ENCODE measurements at regions of chr13 and their contacts with region 1.

Region 1: DNA sequence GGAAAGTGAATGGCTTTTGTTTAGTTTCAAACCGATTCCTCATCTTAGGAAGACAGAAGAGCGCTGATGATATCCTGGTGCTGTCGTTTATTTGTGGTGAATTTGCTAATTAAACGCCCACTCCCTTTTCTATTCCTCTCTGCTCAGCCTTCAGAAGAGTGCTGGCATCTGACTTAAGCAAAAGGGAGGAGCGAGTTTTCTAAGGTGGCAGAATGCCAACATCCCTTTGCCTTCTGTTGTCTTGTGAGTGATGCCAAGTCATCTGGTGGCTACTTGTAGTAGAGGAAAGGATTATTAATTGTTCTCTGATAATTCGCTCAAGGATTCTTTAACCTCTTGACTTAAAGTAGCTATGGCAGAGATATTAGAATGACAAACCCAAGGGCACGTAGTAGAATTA is 68.1 kb downstream of the ERCC5 start:
- DNase-seq: no peak
- ATAC-seq: no peak
- H3K4me3 ChIP-seq: no peak overlapping the region
- H3K27ac ChIP-seq: no peak overlapping the region
- H3K4me1 ChIP-seq: peaks cover 0 to 11% (median 0%) of the 10 kb centered on the region in 12 donors
- H3K27me3 ChIP-seq: no peaks in the 10 kb centered on the region
- CTCF ChIP-seq: no peak
- POLR2A ChIP-seq: no peak

Region 2: DNA sequence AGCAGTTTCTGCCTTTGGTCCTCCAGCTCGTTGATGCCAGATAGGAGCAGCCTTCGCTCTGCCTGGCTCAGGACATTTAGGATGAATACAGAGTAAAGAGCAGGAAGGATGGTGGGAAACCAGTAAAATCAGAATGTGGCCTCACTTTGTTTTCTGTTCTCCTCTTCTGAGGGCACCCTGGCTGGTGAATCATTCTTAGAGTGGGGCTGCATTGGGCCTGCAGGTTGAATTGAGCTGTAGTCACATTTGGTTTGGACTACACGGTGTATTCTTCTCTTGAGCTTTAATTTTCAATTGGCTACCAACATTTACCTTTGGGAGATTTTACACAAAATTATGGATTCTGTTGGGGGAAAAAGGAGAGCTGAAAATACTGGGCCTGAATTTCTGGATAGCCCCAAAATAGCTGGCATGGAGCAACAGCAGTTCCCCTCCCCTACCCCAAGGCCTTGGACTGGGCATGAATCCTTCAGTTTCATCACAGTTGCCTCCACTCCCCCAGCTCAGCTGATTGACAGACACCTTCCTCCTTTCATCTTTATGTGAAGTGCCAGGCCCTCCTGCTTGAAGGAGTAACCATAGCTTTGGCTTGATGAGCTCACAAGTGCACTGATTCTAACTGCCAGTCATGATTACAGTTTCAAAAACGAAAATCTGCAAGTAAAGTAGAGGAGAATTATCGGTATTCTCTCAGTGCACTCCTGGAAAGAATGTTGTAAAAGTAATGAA is 43.8 kb before region 1 on chr13:
- intact Hi-C with region 1: loop called in 1 of 10 experiments (anchors 5 kb)
- DNase-seq: no peak
- ATAC-seq: peak in 3 of 4 donors; percentile 11 to 19 (median 15)
- H3K4me3 ChIP-seq: no peak overlapping the region
- H3K27ac ChIP-seq: no peak overlapping the region
- H3K4me1 ChIP-seq: peaks cover 0 to 27% (median 12%) of the 10 kb centered on the region in 12 donors
- H3K27me3 ChIP-seq: no peaks in the 10 kb centered on the region
- CTCF ChIP-seq: no peak
- POLR2A ChIP-seq: no peak

Region 3: GRCh38 chr13:103140001-103140671 is 226.2 kb after region 1 on chr13:
- intact Hi-C with region 1: loop called in 5 of 10 experiments (anchors 2 to 10 kb)
- DNase-seq: no peak
- ATAC-seq: peak in 1 of 4 donors; percentile 34
- H3K4me3 ChIP-seq: no peak overlapping the region
- H3K27ac ChIP-seq: no peak overlapping the region
- H3K4me1 ChIP-seq: no peaks in the 10 kb centered on the region
- H3K27me3 ChIP-seq: no peaks in the 10 kb centered on the region
- CTCF ChIP-seq: peak; percentile 18 to 53 (median 32)
- POLR2A ChIP-seq: no peak

Measured in heart left ventricle (tissue), 16 donors.